CD8-positive, alpha-beta T cell (primary cell): ENCODE measurements at regions of chr22 and their contacts with region 1.

Region 1: GRCh38 chr22:28051787-28052356 is 132.8 kb upstream of the PITPNB start:
- DNase-seq: peak in 4 of 9 experiments; percentile 25 to 41 (median 27)
- ATAC-seq: no peak
- H3K4me3 ChIP-seq: no peak overlapping the region
- H3K4me3 Mint-ChIP-seq: no peak overlapping the region
- H3K27ac ChIP-seq: no peak overlapping the region
- H3K27ac Mint-ChIP-seq: no peak overlapping the region
- H3K4me1 ChIP-seq: no peaks in the 10 kb centered on the region
- H3K4me1 Mint-ChIP-seq: no peaks in the 10 kb centered on the region
- H3K27me3 ChIP-seq: no peaks in the 10 kb centered on the region
- H3K27me3 Mint-ChIP-seq: no peaks in the 10 kb centered on the region
- CTCF ChIP-seq: peak; percentile 32

Region 2: GRCh38 chr22:27801616-27802388 is 250.1 kb before region 1 on chr22 and contains the start of gene MN1:
- CTCF ChIA-PET with region 1: no interaction called
- POLR2A ChIA-PET with region 1: no interaction called
- intact Hi-C with region 1: no loop called
- DNase-seq: peak in 8 of 9 experiments; percentile 36 to 75 (median 57)
- ATAC-seq: peak; percentile 75
- H3K4me3 ChIP-seq: peak within 1 kb of the TSS; percentile 63 to 80
- H3K4me3 Mint-ChIP-seq: peak within 1 kb of the TSS; percentile 86
- H3K27ac ChIP-seq: no peak within 1 kb of the TSS
- H3K27ac Mint-ChIP-seq: no peak within 1 kb of the TSS
- H3K4me1 ChIP-seq: peaks cover 12% of the 10 kb centered on the region
- H3K4me1 Mint-ChIP-seq: peaks cover 14% of the 10 kb centered on the region
- H3K27me3 ChIP-seq: peaks cover 9 to 12% of the 10 kb centered on the region in 2 experiments
- H3K27me3 Mint-ChIP-seq: peaks cover 14% of the 10 kb centered on the region
- CTCF ChIP-seq: no peak
- total RNA-seq, gene MN1: 0.36 to 0.38 TPM

Region 3: GRCh38 chr22:28442264-28442710 is 390.4 kb after region 1 on chr22:
- CTCF ChIA-PET with region 1: interaction called, 5 read pairs
- POLR2A ChIA-PET with region 1: no interaction called
- intact Hi-C with region 1: loop called (anchors 2 to 5 kb)
- DNase-seq: peak; percentile 19 to 80 (median 59)
- ATAC-seq: peak; percentile 87
- H3K4me3 ChIP-seq: peak overlapping the region; percentile 63 to 66
- H3K4me3 Mint-ChIP-seq: peak overlapping the region; percentile 87
- H3K27ac ChIP-seq: peak overlapping the region in 1 of 2 experiments; percentile 0
- H3K27ac Mint-ChIP-seq: peak overlapping the region; percentile 72
- H3K4me1 ChIP-seq: peaks cover 13% of the 10 kb centered on the region
- H3K4me1 Mint-ChIP-seq: peaks cover 18% of the 10 kb centered on the region
- H3K27me3 ChIP-seq: no peaks in the 10 kb centered on the region
- H3K27me3 Mint-ChIP-seq: peaks cover 4% of the 10 kb centered on the region
- CTCF ChIP-seq: peak; percentile 56

Region 4: GRCh38 chr22:28594797-28595462 is 543.1 kb after region 1 on chr22:
- CTCF ChIA-PET with region 1: interaction called, 4 read pairs
- POLR2A ChIA-PET with region 1: no interaction called
- intact Hi-C with region 1: loop called in 1 of 2 experiments (anchors 1 kb)
- DNase-seq: peak in 2 of 9 experiments; percentile 38 to 56
- ATAC-seq: peak; percentile 76
- H3K4me3 ChIP-seq: no peak overlapping the region
- H3K4me3 Mint-ChIP-seq: no peak overlapping the region
- H3K27ac ChIP-seq: no peak overlapping the region
- H3K27ac Mint-ChIP-seq: no peak overlapping the region
- H3K4me1 ChIP-seq: no peaks in the 10 kb centered on the region
- H3K4me1 Mint-ChIP-seq: no peaks in the 10 kb centered on the region
- H3K27me3 ChIP-seq: no peaks in the 10 kb centered on the region
- H3K27me3 Mint-ChIP-seq: peaks cover 21% of the 10 kb centered on the region
- CTCF ChIP-seq: peak; percentile 79